Posterior cingulate gyrus (tissue), 11 donors: ENCODE measurements at regions of chr15 and their contacts with region 1.

Region 1: DNA sequence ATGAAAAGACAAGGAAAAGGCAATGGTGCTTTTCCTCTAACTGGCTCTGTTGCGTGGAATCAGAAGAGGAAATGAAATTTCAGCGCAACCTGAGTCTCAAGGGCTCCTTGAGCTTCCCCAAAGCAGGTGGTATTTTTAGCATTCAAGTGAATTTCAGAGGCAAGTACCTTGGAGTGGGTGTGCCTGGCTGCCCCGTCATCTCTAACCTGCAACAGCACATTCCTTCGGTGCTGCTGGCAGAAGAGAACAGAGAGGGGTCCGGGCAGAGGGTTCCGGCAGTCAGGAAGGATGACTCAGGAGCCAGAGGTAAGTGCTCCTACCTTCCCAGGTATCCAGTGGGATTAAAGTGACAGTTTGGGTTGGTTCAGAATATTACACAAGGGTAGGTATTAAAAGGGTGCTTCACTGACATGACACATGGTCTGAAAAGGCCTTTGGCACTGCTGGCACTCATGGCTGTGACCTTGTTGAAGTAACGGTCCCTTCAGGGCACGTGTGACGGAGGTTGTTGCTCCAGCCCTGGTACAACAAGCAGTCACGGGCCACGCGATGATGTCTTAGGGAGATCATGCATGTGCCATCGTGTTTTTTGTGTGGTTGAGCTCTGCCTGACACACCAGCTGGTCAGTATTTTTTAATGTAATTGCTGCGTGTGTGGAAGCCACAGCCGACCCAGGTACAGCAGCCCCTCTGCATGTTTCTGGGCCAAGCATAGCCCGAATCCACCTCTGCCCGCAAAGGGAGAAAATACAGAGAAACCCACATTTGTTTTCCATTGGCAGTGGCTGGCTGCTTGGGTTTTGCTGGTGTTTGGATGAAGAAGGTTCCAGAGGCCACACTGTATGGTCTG is 75.7 kb downstream of the LRRK1 start:
- DNase-seq: peak in 1 of 10 donors; percentile 55

Region 2: GRCh38 chr15:100635406-100636071 is 359.3 kb before region 1 on chr15:
- intact Hi-C with region 1: loop called (anchors 5 kb)
- DNase-seq: no peak